PC-9 (cell line): ENCODE measurements at regions of chr5 and their contacts with region 1.

Region 1: GRCh38 chr5:72847989-72848473 is 31.6 kb downstream of the TNPO1 start:
- DNase-seq: peak; percentile 77 to 85
- H3K4me3 ChIP-seq: peak overlapping the region; percentile 94
- H3K27ac ChIP-seq: peak overlapping the region; percentile 80
- H3K4me1 ChIP-seq: peaks cover 70% of the 10 kb centered on the region
- H3K27me3 ChIP-seq: no peaks in the 10 kb centered on the region
- CTCF ChIP-seq: peak; percentile 54; the same call in 1 of the 2 replicates

Region 2: GRCh38 chr5:72319976-72320752 is 527.9 kb before region 1 on chr5 and contains the starts of genes MRPS27 and PTCD2:
- CTCF ChIA-PET with region 1: no interaction called
- POLR2A ChIA-PET with region 1: interaction called, 3 read pairs
- intact Hi-C with region 1: loop called (anchors 10 kb)
- DNase-seq: peak; percentile 92 to 93
- H3K4me3 ChIP-seq: peak within 1 kb of the TSS; percentile 57
- H3K27ac ChIP-seq: peak within 1 kb of the TSS; percentile 57
- H3K4me1 ChIP-seq: peaks cover 35% of the 10 kb centered on the region
- H3K27me3 ChIP-seq: no peaks in the 10 kb centered on the region
- CTCF ChIP-seq: no peak; the same call in 1 of the 2 replicates
- total RNA-seq, gene MRPS27: 71.0 and 73.1 TPM in 2 replicates
- total RNA-seq, gene PTCD2: 13.4 and 15.5 TPM in 2 replicates